Ovary (tissue), 10 donors: ENCODE measurements at regions of chr1 and their contacts with region 1.

Region 1: DNA sequence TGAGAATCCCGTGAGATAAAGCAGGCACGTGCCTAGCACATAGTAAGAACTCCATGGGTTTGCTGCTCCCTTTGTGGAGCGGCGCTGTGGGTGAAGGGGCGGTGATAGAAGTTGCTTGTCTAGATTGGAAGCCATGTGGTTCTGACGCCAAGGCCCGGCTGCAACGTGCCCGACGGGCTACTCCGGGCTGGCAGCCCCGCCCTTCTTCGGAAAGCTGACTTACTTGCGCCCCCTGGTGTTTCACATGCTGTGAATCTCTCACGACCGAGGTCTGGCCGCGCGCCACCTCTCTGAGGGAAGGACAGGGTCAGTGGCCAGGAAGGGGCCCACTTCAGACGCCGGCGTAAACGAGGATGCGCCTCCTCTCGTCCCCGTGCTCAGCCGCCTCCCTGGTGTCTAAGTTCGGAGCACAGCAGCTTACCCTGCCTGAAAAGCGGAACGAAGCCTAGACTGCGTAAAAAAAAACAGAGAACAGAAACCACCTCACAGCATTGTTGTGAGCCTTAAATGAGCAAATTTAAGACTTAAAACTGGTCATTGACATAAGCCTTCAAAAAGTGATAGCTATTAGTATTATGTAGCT is 42.6 kb upstream of the WNT2B start:
- DNase-seq: peak; percentile 96 to 98 (median 96)
- H3K4me3 ChIP-seq: peak overlapping the region; percentile 30
- H3K27ac ChIP-seq: peak overlapping the region; percentile 43 to 48
- H3K4me1 ChIP-seq: no peaks in the 10 kb centered on the region
- H3K27me3 ChIP-seq: no peaks in the 10 kb centered on the region
- CTCF ChIP-seq: peak; percentile 86 to 95 (median 93)
- EP300 ChIP-seq: no peak
- POLR2A ChIP-seq: peak; percentile 45

Region 2: GRCh38 chr1:112390775-112391602 is 75.2 kb before region 1 on chr1:
- intact Hi-C with region 1: loop called (anchors 1 to 5 kb)
- DNase-seq: peak; percentile 85 to 94 (median 88)
- H3K4me3 ChIP-seq: peak overlapping the region; percentile 35
- H3K27ac ChIP-seq: peak overlapping the region in 1 of 2 donors; percentile 15
- H3K4me1 ChIP-seq: peaks cover 2% of the 10 kb centered on the region
- H3K27me3 ChIP-seq: no peaks in the 10 kb centered on the region
- CTCF ChIP-seq: peak; percentile 63 to 92 (median 85)
- EP300 ChIP-seq: no peak
- POLR2A ChIP-seq: no peak

Region 3: GRCh38 chr1:112522621-112523020 is 56.5 kb after region 1 on chr1:
- intact Hi-C with region 1: no loop called
- DNase-seq: no peak
- H3K4me3 ChIP-seq: no peak overlapping the region
- H3K27ac ChIP-seq: no peak overlapping the region
- H3K4me1 ChIP-seq: peaks cover 2% of the 10 kb centered on the region
- H3K27me3 ChIP-seq: no peaks in the 10 kb centered on the region
- CTCF ChIP-seq: no peak
- EP300 ChIP-seq: no peak
- POLR2A ChIP-seq: no peak

Region 4: DNA sequence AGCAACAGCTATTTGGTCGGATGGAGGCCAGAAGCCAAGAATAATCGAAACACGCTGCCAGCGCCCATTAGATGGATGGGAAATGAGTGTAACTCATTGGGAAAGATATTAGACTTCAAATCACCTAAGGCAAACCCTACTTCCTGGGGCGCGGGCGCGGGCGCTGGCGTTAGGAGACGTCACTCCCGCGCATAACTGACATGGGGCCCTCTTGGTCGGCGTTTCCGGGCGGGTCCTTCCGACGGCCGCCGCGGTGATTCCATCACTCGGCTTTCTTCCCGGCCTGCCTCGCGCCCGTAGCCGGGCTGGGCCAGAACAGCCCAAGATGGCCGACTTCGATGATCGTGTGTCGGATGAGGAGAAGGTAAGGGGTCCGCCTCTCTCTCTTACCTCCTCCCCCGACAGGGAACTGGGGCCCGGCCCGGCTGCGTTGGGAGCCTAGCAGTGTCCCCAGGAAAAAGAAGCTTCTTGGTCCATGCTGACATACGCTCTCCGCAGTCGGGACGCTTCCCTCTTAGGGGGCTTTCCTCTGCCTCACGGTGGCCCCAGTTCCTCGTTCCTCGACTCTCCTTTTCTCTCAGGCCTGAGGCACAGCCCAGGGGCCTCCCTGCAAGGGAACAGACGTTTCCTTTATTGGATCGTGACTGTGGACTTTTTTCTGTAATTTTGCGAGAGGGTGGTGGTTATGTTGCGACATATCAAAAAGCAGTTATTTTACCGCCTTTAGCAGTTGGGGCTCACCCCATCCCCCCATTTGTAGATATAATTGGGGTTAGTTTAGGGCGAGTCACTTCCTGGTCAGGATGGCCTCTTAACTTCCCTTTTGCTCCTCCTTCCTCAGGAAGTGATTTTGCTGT is 153.6 kb after region 1 on chr1 and contains the start of gene CAPZA1:
- intact Hi-C with region 1: no loop called
- DNase-seq: peak; percentile 89 to 93 (median 90)
- H3K4me3 ChIP-seq: peak within 1 kb of the TSS; percentile 95
- H3K27ac ChIP-seq: peak within 1 kb of the TSS; percentile 91 to 93
- H3K4me1 ChIP-seq: peaks cover 3% of the 10 kb centered on the region
- H3K27me3 ChIP-seq: no peaks in the 10 kb centered on the region
- CTCF ChIP-seq: no peak
- EP300 ChIP-seq: no peak
- POLR2A ChIP-seq: peak; percentile 88
- total RNA-seq, gene CAPZA1: 54.0 to 81.2 (median 66.9) TPM

Region 5: GRCh38 chr1:112666946-112667345 is 200.8 kb after region 1 on chr1:
- intact Hi-C with region 1: no loop called
- DNase-seq: no peak
- H3K4me3 ChIP-seq: no peak overlapping the region
- H3K27ac ChIP-seq: no peak overlapping the region
- H3K4me1 ChIP-seq: no peaks in the 10 kb centered on the region
- H3K27me3 ChIP-seq: no peaks in the 10 kb centered on the region
- CTCF ChIP-seq: no peak
- EP300 ChIP-seq: no peak
- POLR2A ChIP-seq: no peak